ENCODE measurements at regions of chr12 and their contacts with region 1.

Region 1: GRCh38 chr12:18492372-18493025 is 231.2 kb downstream of the PIK3C2G start:
- DNase-seq: no peak

Region 2: DNA sequence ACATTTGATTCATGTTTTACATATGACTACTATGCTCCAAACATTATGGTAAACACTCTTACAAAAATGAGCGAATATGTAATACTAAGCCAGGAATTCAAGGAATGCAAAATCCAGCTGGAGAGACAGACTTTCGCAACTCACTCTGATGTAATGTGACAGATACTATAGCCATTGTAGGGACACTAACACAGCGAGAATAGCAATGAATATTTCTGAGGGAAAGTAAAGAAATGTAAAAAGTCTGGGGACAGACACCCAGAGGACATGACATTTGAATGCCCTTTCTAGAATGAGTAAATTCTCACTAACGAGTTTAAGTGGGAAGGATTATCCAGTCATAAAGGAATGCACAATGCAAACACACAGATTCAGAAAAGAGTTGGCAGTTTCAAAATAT is 109.3 kb before region 1 on chr12:
- intact Hi-C with region 1: no loop called
- DNase-seq: no peak

Region 3: DNA sequence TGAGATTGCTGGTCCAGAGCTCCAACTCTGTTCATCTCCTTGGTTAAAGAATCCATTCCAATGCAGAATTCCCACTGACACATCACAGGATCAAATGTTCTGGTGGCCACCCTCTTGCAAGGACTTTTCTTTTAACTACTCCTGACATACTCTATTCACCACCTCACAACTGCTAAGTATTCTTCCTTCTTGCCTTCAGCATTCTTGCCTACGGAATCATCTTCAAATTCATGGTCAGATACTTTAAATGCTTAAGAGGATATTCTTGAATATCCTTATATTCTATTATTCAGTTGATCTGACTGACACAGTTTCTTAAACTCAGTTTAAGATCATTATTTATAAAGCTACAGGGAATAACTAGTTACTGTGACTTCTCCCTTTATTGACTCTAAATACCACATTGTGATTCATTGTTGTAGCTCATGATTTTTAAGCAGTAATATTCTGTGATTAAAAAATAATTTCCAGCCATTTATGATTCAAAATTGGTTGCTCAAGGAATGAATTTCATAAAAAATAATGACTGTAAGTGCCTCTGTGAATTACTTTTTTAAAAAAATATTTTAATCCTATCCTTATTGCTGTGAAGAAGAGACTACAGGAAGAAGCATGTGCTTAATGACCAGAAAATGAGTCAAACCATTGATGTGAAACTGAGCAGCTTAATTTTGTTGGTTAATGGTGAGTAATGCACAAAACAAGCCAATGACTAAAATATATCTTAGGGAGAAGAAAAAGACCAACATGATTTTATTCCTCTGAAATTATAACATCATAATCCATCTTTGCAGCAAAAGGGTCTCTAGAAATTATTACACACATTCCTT is 24.0 kb before region 1 on chr12:
- intact Hi-C with region 1: loop called in 1 of 2 experiments (anchors 1 kb)
- DNase-seq: no peak

Measured in posterior vena cava (tissue), 2 donors.